CD14-positive monocyte (primary cell): ENCODE measurements at regions of chr6 and their contacts with region 1.

Region 1: DNA sequence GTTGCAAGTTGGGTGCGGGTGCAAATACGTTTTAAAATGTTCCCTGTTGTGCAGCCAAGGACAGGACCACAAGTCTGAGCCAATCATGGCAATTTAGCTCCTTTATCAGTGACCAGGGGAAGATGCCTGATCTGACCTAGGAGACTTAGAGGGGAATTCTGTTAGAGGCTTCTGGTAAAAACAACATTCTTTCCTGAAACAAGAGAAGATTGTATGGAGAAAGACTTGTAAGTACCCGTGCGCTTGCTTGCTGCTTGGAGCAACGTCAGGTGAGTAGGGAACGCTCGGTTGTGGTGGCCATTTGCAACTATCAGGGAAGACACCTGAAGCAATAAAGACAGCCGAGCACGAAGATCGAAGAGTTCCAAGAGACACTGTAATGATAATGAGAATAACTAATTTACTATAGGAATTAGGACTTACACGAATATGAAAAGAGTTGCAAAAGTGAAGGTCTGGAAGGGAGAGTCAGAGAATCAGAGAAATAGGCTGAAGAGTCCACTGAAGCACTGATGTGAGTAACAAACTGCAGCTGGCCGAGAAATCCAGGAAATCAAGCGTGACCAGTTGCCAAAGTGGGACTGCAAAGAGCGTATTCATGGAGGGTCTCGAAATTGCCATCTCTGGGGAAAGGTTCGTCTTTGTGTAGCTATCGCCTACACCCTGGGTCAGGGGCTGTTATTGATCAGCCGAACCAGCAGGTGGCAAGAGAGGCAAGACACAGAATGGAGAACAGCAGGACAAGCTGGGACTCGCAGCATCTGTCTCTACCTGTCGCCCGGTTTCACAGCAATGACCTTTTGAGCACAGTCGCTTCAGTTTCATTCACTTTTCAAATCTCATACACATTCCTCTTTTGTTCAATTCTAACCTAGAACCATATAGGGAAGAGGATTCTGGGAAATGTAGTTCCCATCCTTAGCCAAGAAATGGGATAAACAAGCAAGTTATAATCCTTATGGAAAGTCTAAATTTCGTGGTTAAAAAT is 26.1 kb downstream of the LOC128125822 start:
- DNase-seq: peak; percentile 54 to 65 (median 59)
- H3K4me3 ChIP-seq: peak overlapping the region; percentile 15 to 82 (median 77)
- H3K4me3 Mint-ChIP-seq: peak overlapping the region; percentile 82 to 95
- H3K27ac ChIP-seq: peak overlapping the region in 1 of 2 donors; percentile 1
- H3K27ac Mint-ChIP-seq: peak overlapping the region in 3 of 7 donors; percentile 12 to 58 (median 17)
- H3K4me1 ChIP-seq: peaks cover 9 to 13% of the 10 kb centered on the region in 2 donors
- H3K4me1 Mint-ChIP-seq: peaks cover 16% of the 10 kb centered on the region
- H3K27me3 ChIP-seq: peaks cover 0 to 3% of the 10 kb centered on the region in 2 donors
- H3K27me3 Mint-ChIP-seq: peaks cover 0 to 3% (median 2%) of the 10 kb centered on the region in 3 donors
- CTCF ChIP-seq: peak; percentile 89

Region 2: GRCh38 chr6:63685446-63686379 is 87.4 kb after region 1 on chr6:
- intact Hi-C with region 1: loop called in 1 of 2 experiments (anchors 10 kb)
- DNase-seq: peak; percentile 59 to 78 (median 64)
- H3K4me3 ChIP-seq: peak overlapping the region in 2 of 3 experiments; percentile 36 to 46
- H3K4me3 Mint-ChIP-seq: peak overlapping the region; percentile 48 to 77
- H3K27ac ChIP-seq: peak overlapping the region in 1 of 2 donors; percentile 72
- H3K27ac Mint-ChIP-seq: peak overlapping the region; percentile 80 to 88 (median 85)
- H3K4me1 ChIP-seq: peaks cover 38 to 61% of the 10 kb centered on the region in 2 donors
- H3K4me1 Mint-ChIP-seq: peaks cover 63% of the 10 kb centered on the region
- H3K27me3 ChIP-seq: no peaks in the 10 kb centered on the region
- H3K27me3 Mint-ChIP-seq: no peaks in the 10 kb centered on the region
- CTCF ChIP-seq: no peak

Region 3: GRCh38 chr6:63764318-63764916 is 166.1 kb after region 1 on chr6:
- intact Hi-C with region 1: loop called in 1 of 2 experiments (anchors 5 kb)
- DNase-seq: peak; percentile 34 to 69 (median 48)
- H3K4me3 ChIP-seq: no peak overlapping the region
- H3K4me3 Mint-ChIP-seq: no peak overlapping the region
- H3K27ac ChIP-seq: no peak overlapping the region
- H3K27ac Mint-ChIP-seq: no peak overlapping the region
- H3K4me1 ChIP-seq: no peaks in the 10 kb centered on the region
- H3K4me1 Mint-ChIP-seq: no peaks in the 10 kb centered on the region
- H3K27me3 ChIP-seq: no peaks in the 10 kb centered on the region
- H3K27me3 Mint-ChIP-seq: peaks cover 2 to 3% (median 2%) of the 10 kb centered on the region in 3 donors
- CTCF ChIP-seq: peak; percentile 72